Ascending aorta (tissue), 2 donors: ENCODE measurements at regions of chr3 and their contacts with region 1.

Region 1: GRCh38 chr3:188262913-188263683 is 109.1 kb downstream of the LPP start:
- DNase-seq: peak in 1 of 2 donors; percentile 91
- H3K4me3 ChIP-seq: no peak overlapping the region
- H3K27ac ChIP-seq: peak overlapping the region; percentile 94 to 99
- H3K4me1 ChIP-seq: peaks cover 24 to 67% of the 10 kb centered on the region in 2 donors
- H3K27me3 ChIP-seq: no peaks in the 10 kb centered on the region
- CTCF ChIP-seq: no peak

Region 2: DNA sequence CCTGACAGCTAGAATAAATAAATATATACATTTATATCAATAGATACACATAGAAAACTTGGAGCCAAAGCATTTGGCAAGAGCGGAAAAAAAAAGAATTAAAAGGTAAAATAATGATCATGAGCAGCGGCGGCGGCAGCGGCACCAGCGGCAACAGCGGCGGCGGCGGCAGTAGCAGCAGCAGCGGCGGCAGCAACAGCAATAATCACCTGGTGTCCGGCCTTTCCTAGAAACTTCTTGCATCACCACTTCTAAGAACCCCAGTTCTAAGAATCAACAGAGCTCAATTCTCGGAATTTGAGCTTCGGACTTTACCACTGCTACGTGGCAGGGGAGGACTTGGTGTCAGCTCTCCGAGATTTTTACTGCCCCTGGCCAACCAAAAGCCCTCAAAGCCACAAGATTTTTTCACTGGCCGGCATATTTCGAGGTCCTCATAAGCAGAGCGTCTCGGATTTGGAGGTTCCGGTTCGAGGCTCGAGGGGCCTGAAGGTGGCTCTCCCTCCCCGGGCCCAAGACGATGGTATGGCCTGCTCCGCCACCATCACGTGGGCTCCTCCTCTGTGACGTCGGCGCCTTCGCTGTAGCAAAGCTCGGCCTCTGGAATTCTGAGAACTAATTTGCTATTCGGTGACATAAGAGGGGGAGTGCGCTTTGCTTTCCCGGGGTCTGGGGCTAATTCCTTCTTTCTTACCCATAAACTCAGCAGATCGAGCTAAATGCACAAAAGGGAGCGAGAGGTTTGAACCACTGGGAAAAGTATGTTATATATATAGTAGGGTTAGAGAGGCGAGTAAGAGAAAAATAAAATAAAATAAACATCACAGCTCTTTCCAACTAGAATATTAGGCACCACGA is 517.7 kb before region 1 on chr3 and contains the start of gene BCL6:
- intact Hi-C with region 1: loop called (anchors 2 kb)
- DNase-seq: peak; percentile 66 to 97
- H3K4me3 ChIP-seq: peak within 1 kb of the TSS; percentile 73 to 75
- H3K27ac ChIP-seq: peak within 1 kb of the TSS; percentile 98 to 99
- H3K4me1 ChIP-seq: peaks cover 9 to 12% of the 10 kb centered on the region in 2 donors
- H3K27me3 ChIP-seq: no peaks in the 10 kb centered on the region
- CTCF ChIP-seq: peak in 1 of 3 experiments; percentile 12
- total RNA-seq, gene BCL6: 97.9 TPM

Region 3: DNA sequence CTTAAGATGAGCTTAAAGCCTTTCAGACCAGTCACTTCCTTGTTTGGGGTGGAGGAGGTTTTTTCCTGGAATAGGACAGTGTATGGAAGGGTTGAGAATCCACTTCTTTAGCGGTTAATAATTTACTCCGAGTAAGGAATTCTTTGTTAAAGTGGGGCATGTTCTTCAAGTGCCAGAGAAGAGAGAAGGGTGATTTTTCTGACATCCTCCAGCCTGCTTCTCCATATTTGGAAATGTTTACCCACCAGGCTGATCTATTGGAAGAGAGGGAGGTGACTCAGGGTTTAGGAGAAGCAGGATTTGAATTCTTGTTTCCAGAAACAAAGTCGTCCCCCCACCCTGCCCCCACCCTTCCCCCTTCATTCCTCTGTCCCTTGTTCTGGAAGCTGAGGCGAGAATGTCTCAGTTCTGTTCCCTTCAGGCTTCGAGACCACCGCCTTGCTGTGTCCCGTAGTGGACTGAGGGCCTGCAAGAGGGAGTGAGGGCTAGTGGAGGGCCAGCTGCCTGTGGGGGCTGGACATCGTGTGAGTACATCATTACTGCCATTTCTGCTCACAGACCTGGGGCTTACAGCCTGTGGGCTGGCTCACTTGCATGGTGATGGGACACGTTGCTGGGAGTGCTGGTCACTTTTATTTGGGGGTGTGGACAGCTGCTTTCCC is 50.7 kb before region 1 on chr3:
- intact Hi-C with region 1: loop called (anchors 2 kb)
- DNase-seq: peak in 1 of 2 donors; percentile 82
- H3K4me3 ChIP-seq: peak overlapping the region; percentile 49 to 63
- H3K27ac ChIP-seq: peak overlapping the region; percentile 92 to 96
- H3K4me1 ChIP-seq: peaks cover 17 to 33% of the 10 kb centered on the region in 2 donors
- H3K27me3 ChIP-seq: no peaks in the 10 kb centered on the region
- CTCF ChIP-seq: no peak

Region 4: GRCh38 chr3:188230962-188231361 is 32.1 kb before region 1 on chr3:
- intact Hi-C with region 1: loop called (anchors 2 kb)
- DNase-seq: peak; percentile 47 to 84
- H3K4me3 ChIP-seq: peak overlapping the region in 1 of 2 donors; percentile 2
- H3K27ac ChIP-seq: peak overlapping the region; percentile 82 to 89
- H3K4me1 ChIP-seq: peaks cover 7 to 80% of the 10 kb centered on the region in 2 donors
- H3K27me3 ChIP-seq: no peaks in the 10 kb centered on the region
- CTCF ChIP-seq: no peak

Region 5: DNA sequence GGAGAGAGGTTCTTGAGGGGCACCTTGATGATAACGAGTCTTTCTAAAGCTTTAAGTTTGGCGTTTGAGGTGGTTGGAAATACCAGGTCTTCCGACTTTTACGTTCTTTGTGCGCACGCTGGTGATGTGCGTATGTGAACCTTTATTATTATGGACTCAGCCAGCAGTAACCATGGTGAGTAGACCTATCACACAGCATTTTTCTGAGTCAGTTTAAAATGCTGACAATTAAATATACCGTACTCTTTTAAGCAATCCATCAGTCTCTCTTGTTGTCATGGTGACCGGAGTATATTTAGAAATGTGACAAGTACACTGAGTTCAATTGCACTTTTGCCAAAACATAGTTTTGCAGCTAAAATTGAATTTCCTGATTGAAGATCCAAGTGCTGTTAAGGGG is 63.0 kb after region 1 on chr3:
- intact Hi-C with region 1: loop called (anchors 5 kb)
- DNase-seq: peak in 1 of 2 donors; percentile 72
- H3K4me3 ChIP-seq: peak overlapping the region in 1 of 2 donors; percentile 29
- H3K27ac ChIP-seq: peak overlapping the region; percentile 62 to 73
- H3K4me1 ChIP-seq: peaks cover 11 to 53% of the 10 kb centered on the region in 2 donors
- H3K27me3 ChIP-seq: no peaks in the 10 kb centered on the region
- CTCF ChIP-seq: no peak

Region 6: DNA sequence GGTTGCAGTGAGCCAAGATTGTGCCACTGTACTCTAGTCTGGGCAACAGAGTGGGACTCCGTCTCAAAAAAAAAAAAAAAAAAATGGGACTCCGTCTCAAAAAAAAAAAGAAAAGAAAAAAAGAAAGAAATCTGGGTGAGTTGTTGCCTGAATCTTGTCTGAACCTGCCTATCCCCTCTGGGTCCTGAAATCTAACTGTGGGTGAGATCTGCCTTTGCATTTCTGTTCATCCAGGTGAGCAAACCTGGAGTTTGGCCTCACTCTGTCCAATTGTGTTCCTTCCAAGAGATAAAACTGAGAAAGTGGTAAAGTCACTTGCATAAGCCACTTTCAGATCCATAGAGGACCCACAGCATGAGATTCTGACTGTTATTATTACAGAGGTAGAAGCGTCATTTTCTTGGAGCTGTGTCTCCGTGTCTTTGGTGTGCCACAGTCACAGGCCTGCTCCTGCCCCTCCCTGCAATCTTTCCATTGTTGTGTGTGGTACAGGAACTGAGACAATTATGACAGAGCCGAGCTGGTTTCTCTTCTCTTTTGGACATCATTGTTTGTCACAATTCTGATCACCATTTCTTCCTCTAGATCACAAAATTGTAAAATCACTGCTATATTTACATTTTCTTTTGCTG is 126.7 kb after region 1 on chr3:
- intact Hi-C with region 1: no loop called
- DNase-seq: peak; percentile 31 to 74
- H3K4me3 ChIP-seq: no peak overlapping the region
- H3K27ac ChIP-seq: peak overlapping the region; percentile 46 to 65
- H3K4me1 ChIP-seq: peaks cover 2 to 52% of the 10 kb centered on the region in 2 donors
- H3K27me3 ChIP-seq: no peaks in the 10 kb centered on the region
- CTCF ChIP-seq: no peak

Region 7: GRCh38 chr3:188954590-188955208 is 691.6 kb after region 1 on chr3:
- intact Hi-C with region 1: loop called (anchors 5 kb)
- DNase-seq: peak; percentile 36 to 92
- H3K4me3 ChIP-seq: no peak overlapping the region
- H3K27ac ChIP-seq: peak overlapping the region in 1 of 2 donors; percentile 36
- H3K4me1 ChIP-seq: peaks cover 12 to 24% of the 10 kb centered on the region in 2 donors
- H3K27me3 ChIP-seq: no peaks in the 10 kb centered on the region
- CTCF ChIP-seq: peak; percentile 86 to 94 (median 92)